MCF 10A (cell line): ENCODE measurements at regions of chr1 and their contacts with region 1.

Region 1: DNA sequence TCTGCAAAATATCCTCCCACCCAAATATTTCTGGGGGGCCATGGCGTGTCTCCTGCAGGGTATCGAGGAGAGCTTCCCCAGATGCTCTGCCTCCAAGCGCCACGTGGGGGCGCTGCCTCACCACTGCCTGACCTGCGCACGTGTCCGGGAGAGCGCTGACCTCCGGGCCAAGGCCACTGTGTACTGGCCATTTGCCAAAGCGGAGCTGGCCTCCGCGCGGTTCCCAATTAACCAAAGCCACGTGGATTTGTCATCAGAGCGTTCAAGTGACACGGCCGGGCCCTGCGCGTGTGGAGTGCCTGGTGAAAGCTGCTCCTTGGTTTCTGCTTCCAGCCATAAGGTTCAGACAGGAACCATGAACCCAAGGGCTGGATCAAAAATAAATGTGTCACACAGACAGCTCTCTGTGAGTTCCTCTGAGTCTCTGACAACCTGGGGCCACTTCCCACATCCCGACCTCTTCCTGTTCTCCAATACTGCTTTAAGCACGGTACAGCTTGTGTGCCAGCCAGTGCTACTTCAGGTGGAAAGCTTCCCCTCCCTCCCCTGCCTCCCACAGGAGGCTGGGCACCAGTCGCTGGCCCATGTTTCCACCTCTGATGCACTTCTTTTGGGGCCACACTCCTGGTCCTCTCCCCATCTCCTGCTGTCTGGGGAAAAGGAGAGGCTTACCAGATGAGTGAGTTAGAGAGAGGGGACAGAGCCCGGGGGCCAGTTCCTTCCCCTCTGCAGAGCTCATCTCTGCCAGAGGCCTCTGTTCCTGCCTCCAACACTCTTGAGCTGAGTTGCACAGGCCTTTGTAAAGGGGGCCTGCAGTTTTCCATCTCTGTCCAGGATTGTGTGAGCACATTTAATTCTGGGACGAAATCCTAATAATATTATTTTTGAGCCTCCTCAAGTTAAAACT is 26.1 kb downstream of the ZP4 start:
- DNase-seq: peak; percentile 77
- H3K4me3 Mint-ChIP-seq: peak overlapping the region; percentile 66
- H3K27ac Mint-ChIP-seq: peak overlapping the region; percentile 16
- H3K4me1 Mint-ChIP-seq: peaks cover 9% of the 10 kb centered on the region
- H3K27me3 Mint-ChIP-seq: no peaks in the 10 kb centered on the region
- CTCF ChIP-seq: peak; percentile 100

Region 2: GRCh38 chr1:237884237-237884636 is 19.6 kb after region 1 on chr1:
- CTCF ChIA-PET with region 1: interaction called, 139 read pairs
- POLR2A ChIA-PET with region 1: no interaction called
- intact Hi-C with region 1: no loop called
- DNase-seq: no peak
- H3K4me3 Mint-ChIP-seq: no peak overlapping the region
- H3K27ac Mint-ChIP-seq: no peak overlapping the region
- H3K4me1 Mint-ChIP-seq: peaks cover 7% of the 10 kb centered on the region
- H3K27me3 Mint-ChIP-seq: no peaks in the 10 kb centered on the region
- CTCF ChIP-seq: no peak

Region 3: GRCh38 chr1:237932816-237933215 is 68.2 kb after region 1 on chr1:
- CTCF ChIA-PET with region 1: interaction called, 10 read pairs
- POLR2A ChIA-PET with region 1: no interaction called
- intact Hi-C with region 1: loop called (anchors 2 kb)
- DNase-seq: peak; percentile 85
- H3K4me3 Mint-ChIP-seq: no peak overlapping the region
- H3K27ac Mint-ChIP-seq: peak overlapping the region; percentile 21
- H3K4me1 Mint-ChIP-seq: peaks cover 8% of the 10 kb centered on the region
- H3K27me3 Mint-ChIP-seq: no peaks in the 10 kb centered on the region
- CTCF ChIP-seq: no peak

Region 4: GRCh38 chr1:238073991-238074390 is 209.4 kb after region 1 on chr1:
- CTCF ChIA-PET with region 1: interaction called, 12 read pairs
- POLR2A ChIA-PET with region 1: no interaction called
- intact Hi-C with region 1: no loop called
- DNase-seq: no peak
- H3K4me3 Mint-ChIP-seq: no peak overlapping the region
- H3K27ac Mint-ChIP-seq: no peak overlapping the region
- H3K4me1 Mint-ChIP-seq: peaks cover 5% of the 10 kb centered on the region
- H3K27me3 Mint-ChIP-seq: no peaks in the 10 kb centered on the region
- CTCF ChIP-seq: no peak

Region 5: DNA sequence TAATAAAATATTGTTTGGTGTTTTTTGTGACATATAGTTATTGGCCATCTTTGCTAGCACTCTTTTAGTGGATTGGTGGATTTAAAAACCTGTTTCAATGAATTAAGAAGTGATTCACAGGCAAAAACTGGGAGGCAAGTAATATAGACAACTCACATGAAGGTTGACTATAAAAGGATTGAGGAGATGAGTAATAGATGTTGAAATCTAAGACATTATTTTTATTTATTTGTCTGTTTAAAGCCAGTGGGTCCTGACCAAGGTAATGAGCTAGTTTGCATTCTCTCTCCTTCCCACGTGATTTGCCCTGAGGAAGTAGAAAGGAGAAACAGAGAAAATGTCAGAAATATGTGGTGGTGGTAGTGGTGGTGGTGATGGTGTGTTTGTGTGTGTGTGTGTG is 377.6 kb after region 1 on chr1:
- CTCF ChIA-PET with region 1: interaction called, 116 read pairs
- POLR2A ChIA-PET with region 1: no interaction called
- intact Hi-C with region 1: no loop called
- DNase-seq: peak; percentile 40
- H3K4me3 Mint-ChIP-seq: no peak overlapping the region
- H3K27ac Mint-ChIP-seq: no peak overlapping the region
- H3K4me1 Mint-ChIP-seq: peaks cover 6% of the 10 kb centered on the region
- H3K27me3 Mint-ChIP-seq: no peaks in the 10 kb centered on the region
- CTCF ChIP-seq: no peak

Region 6: DNA sequence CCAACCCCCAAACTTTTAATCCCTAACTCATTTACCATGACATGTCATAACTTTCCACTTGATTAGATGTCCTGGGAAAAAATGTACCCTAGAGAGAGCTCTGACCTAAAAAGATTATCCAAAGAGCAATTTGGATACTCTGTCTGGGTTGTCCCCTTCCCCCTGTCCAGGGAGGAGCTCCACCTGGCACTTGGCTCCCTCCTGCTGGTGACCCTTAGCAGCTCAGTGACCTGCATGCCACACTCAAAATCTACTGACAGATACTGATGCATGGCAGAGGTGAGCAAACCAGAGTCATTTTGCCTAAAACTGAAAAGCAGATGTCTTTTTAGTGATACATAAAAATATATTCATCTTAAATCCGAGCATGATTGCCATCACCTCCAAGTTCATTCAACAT is 1079.4 kb after region 1 on chr1:
- CTCF ChIA-PET with region 1: interaction called, 167 read pairs
- POLR2A ChIA-PET with region 1: no interaction called
- intact Hi-C with region 1: no loop called
- DNase-seq: no peak
- H3K4me3 Mint-ChIP-seq: no peak overlapping the region
- H3K27ac Mint-ChIP-seq: no peak overlapping the region
- H3K4me1 Mint-ChIP-seq: no peaks in the 10 kb centered on the region
- H3K27me3 Mint-ChIP-seq: no peaks in the 10 kb centered on the region
- CTCF ChIP-seq: no peak